IMR-90 (cell line): ENCODE measurements at regions of chr2 and their contacts with region 1.

Region 1: GRCh38 chr2:84038866-84039265 is 420.2 kb downstream of the SUCLG1 start:
- DNase-seq: no peak
- ATAC-seq: no peak
- H3K4me3 ChIP-seq: no peak overlapping the region
- H3K27ac ChIP-seq: no peak overlapping the region
- H3K4me1 ChIP-seq: no peaks in the 10 kb centered on the region
- H3K27me3 ChIP-seq: no peaks in the 10 kb centered on the region
- CTCF ChIP-seq: no peak
- POLR2A ChIP-seq: no peak
- RAD21 ChIP-seq: no peak

Region 2: DNA sequence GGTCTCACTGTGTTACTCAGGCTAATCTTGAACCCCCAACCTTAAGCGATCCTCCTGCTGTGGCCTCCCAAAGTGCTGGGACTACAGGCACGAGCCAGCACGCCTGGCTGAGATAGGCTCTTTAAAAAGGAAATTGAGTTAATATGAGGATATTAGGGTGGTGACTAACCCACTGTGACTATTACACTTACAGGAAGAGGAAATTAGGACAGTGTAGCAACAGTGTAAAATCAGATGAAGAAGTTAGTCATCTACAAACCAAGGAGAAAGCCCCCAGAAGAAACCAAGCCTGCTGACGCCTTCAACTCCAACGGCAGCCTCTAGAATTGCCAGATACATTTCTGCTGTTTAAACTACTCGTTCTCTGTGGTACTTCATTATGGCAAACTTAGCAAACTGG is 291.7 kb before region 1 on chr2:
- CTCF ChIA-PET with region 1: interaction called, 10 read pairs
- POLR2A ChIA-PET with region 1: no interaction called
- dilution Hi-C with region 1: no loop called
- in situ Hi-C with region 1: no loop called
- intact Hi-C with region 1: no loop called
- DNase-seq: no peak
- ATAC-seq: no peak
- H3K4me3 ChIP-seq: no peak overlapping the region
- H3K27ac ChIP-seq: no peak overlapping the region
- H3K4me1 ChIP-seq: no peaks in the 10 kb centered on the region
- H3K27me3 ChIP-seq: no peaks in the 10 kb centered on the region
- CTCF ChIP-seq: no peak
- POLR2A ChIP-seq: no peak
- RAD21 ChIP-seq: no peak

Region 3: GRCh38 chr2:84865181-84865783 is 826.4 kb after region 1 on chr2:
- CTCF ChIA-PET with region 1: no interaction called
- POLR2A ChIA-PET with region 1: no interaction called
- dilution Hi-C with region 1: no loop called
- in situ Hi-C with region 1: loop called (anchors 25 kb)
- intact Hi-C with region 1: no loop called
- DNase-seq: peak; percentile 43
- ATAC-seq: peak; percentile 63
- H3K4me3 ChIP-seq: no peak overlapping the region
- H3K27ac ChIP-seq: no peak overlapping the region
- H3K4me1 ChIP-seq: peaks cover 2% of the 10 kb centered on the region; the same call in 1 of the 2 replicates
- H3K27me3 ChIP-seq: no peaks in the 10 kb centered on the region
- CTCF ChIP-seq: peak; percentile 43; the same call in 1 of the 2 replicates
- POLR2A ChIP-seq: no peak
- RAD21 ChIP-seq: peak; percentile 57